Motor neuron (in vitro differentiated cells): ENCODE measurements at regions of chr2 and their contacts with region 1.

Region 1: DNA sequence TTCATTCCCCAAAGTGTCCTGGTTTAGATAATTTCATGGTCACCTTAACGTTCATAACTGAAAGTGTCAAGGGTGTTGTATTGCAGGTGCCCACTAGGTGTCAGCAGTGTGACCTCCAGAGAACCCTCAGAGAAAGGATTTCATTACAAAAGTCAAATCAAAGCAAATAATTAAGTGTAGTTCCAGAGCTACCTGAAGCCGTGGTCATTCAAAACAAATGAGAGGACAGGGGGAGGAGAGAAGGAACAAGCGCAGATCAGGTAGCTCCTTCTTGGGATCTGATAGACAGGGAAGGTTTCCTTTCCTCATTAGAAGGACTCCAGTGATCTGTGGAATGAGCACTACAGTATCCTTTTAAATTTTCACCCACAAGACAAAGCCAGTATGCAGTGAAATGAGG is at the start of gene SLC9A4:
- ATAC-seq: peak in 4 of 8 experiments; percentile 36 to 63 (median 48)
- H3K4me3 ChIP-seq: no peak within 1 kb of the TSS
- H3K27ac ChIP-seq: no peak within 1 kb of the TSS
- H3K4me1 ChIP-seq: no peaks in the 10 kb centered on the region
- total RNA-seq, gene SLC9A4: 0.13 to 2.2 (median 1.2) TPM in 6 of 8 experiments, not detected in the others

Region 2: GRCh38 chr2:102342891-102343290 is 130.1 kb before region 1 on chr2:
- in situ Hi-C with region 1: no loop called
- ATAC-seq: no peak
- H3K4me3 ChIP-seq: no peak overlapping the region
- H3K27ac ChIP-seq: no peak overlapping the region
- H3K4me1 ChIP-seq: no peaks in the 10 kb centered on the region

Region 3: GRCh38 chr2:102615622-102616436 is 142.8 kb after region 1 on chr2:
- in situ Hi-C with region 1: loop called in 4 of 9 experiments (anchors 10 to 25 kb)
- ATAC-seq: peak in 6 of 8 experiments; percentile 26 to 80 (median 55)
- H3K4me3 ChIP-seq: no peak overlapping the region
- H3K27ac ChIP-seq: no peak overlapping the region
- H3K4me1 ChIP-seq: peaks cover 4 to 10% of the 10 kb centered on the region in 2 donors